Colonic mucosa (tissue), 4 donors: ENCODE measurements at regions of chr6 and their contacts with region 1.

Region 1: GRCh38 chr6:99746261-99746895 is 139.7 kb downstream of the PRDM13 start:
- DNase-seq: peak; percentile 55
- H3K4me3 ChIP-seq: no peak overlapping the region
- H3K27ac ChIP-seq: no peak overlapping the region
- H3K4me1 ChIP-seq: no peaks in the 10 kb centered on the region
- H3K27me3 ChIP-seq: no peaks in the 10 kb centered on the region
- CTCF ChIP-seq: peak; percentile 82

Region 2: GRCh38 chr6:99467509-99468106 is 278.8 kb before region 1 on chr6:
- intact Hi-C with region 1: loop called (anchors 2 kb)
- DNase-seq: no peak
- H3K4me3 ChIP-seq: no peak overlapping the region
- H3K27ac ChIP-seq: no peak overlapping the region
- H3K4me1 ChIP-seq: no peaks in the 10 kb centered on the region
- H3K27me3 ChIP-seq: no peaks in the 10 kb centered on the region
- CTCF ChIP-seq: peak; percentile 54

Region 3: DNA sequence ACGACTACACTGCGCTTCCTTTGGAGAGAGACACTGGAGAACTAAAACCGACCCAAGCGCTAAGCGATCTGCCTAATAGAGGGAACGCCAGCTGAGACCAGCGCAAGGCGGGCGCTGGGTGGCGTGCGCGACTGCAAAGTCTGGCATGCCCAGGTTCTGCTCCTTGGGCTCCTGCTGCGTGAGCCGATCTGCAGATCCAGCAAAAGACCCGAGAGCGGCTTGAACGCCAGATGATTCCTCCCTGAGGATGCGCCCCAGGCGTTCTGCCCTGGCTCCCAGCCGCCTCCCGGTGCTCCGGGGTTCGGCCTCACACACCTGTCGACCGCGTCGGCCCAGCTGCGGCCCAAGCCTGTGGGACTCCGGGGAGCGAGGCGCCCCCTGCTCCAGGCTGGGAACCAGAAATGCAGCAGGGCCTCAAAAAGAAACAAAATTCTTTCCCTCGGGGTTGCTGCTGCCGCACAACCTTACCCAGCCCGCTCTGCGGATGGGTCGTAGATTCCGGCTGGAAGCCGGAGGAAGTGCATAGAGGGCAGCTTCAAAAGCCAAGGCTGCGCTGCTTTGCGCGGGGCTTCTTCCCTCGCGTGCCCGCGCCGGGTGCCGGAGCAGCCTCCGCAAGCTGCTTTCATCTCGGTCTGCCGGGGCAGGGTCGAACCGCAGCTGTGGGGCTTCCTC is 157.6 kb before region 1 on chr6:
- intact Hi-C with region 1: loop called (anchors 10 kb)
- DNase-seq: peak; percentile 65
- H3K4me3 ChIP-seq: peak overlapping the region; percentile 50
- H3K27ac ChIP-seq: no peak overlapping the region
- H3K4me1 ChIP-seq: no peaks in the 10 kb centered on the region
- H3K27me3 ChIP-seq: peaks cover 52% of the 10 kb centered on the region
- CTCF ChIP-seq: peak; percentile 31